GM12878 (cell line): ENCODE measurements at regions of chr10 and their contacts with region 1.

Region 1: DNA sequence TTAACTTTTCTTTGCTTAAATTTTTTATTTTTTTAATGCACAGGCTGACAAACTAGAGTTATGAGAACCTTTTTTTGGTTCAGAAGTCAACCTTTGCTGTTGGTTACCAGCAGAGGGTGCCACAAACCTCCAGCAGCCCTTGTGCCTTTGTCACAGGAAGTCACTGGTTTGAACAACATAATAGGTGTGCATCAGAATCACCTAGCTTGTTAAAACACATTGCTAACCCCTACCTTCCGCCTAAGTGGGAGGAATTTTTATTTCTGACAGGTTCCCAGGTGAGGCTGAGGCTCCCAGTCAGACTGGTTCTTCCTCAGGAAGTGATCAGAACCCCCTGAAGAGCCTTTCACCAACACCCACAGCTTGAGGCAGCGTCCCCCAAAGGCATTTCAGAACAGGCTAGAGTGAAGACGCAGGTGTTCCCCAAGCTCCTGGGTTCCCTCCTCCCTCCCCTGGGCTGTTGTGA is 22.6 kb upstream of the VDAC2 start:
- DNase-seq: peak; percentile 20
- ATAC-seq: peak; percentile 96
- H3K4me3 ChIP-seq: no peak overlapping the region
- H3K27ac ChIP-seq: no peak overlapping the region
- H3K4me1 ChIP-seq: no peaks in the 10 kb centered on the region
- H3K27me3 ChIP-seq: no peaks in the 10 kb centered on the region
- CTCF ChIP-seq: peak; percentile 75 to 81 (median 79)
- EP300 ChIP-seq: no peak
- POLR2A ChIP-seq: no peak
- RAD21 ChIP-seq: peak; percentile 83

Region 2: DNA sequence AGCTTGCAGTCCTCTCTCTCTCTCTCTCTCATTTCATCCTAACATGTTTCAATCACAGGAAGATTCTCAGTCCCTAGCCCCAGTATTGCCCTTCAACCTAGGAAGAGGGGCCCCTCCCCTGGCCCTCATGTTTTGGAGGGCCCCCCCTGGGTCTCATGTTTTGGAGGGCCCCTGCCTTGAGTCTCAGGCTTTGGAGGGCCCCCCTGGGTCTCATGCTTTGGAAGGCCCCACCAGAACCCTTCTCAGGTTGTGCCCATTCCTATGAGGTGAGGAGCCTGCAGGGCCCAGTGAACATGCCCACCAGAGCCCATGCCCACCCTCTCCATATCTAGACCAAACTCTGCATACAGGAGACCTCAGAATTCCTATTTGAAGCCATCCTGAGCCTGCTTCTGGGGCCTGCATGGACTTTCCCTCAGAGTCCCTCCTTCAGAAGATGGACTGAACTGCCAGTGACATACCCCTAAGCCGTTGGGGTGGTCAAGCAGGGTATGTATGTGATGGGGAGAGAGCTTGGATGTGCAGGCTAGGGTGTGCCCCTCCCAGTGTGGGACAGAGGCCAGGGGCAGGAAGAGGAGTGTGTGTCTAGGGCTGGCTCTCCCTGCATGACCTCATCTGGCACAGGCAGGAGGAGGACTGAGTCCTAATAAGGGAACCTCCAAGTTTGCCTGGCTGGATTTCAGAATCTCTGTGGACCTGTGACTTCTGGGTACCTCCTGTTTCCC is 14.5 kb after region 1 on chr10:
- CTCF ChIA-PET with region 1: interaction called, 12 read pairs
- POLR2A ChIA-PET with region 1: interaction called, 3 read pairs
- RAD21 ChIA-PET with region 1: interaction called, 5 read pairs
- SMC1A ChIA-PET with region 1: interaction called, 4 read pairs
- in situ Hi-C with region 1: no loop called
- intact Hi-C with region 1: no loop called
- DNase-seq: no peak
- ATAC-seq: no peak
- H3K4me3 ChIP-seq: no peak overlapping the region
- H3K27ac ChIP-seq: no peak overlapping the region
- H3K4me1 ChIP-seq: no peaks in the 10 kb centered on the region
- H3K27me3 ChIP-seq: no peaks in the 10 kb centered on the region
- CTCF ChIP-seq: no peak
- EP300 ChIP-seq: no peak
- POLR2A ChIP-seq: no peak
- RAD21 ChIP-seq: no peak

Region 3: GRCh38 chr10:75229971-75230370 is 42.0 kb after region 1 on chr10:
- CTCF ChIA-PET with region 1: interaction called, 207 read pairs
- POLR2A ChIA-PET with region 1: interaction called, 6 read pairs
- RAD21 ChIA-PET with region 1: interaction called, 52 read pairs
- SMC1A ChIA-PET with region 1: interaction called, 21 read pairs
- in situ Hi-C with region 1: no loop called
- intact Hi-C with region 1: no loop called
- DNase-seq: no peak
- ATAC-seq: no peak
- H3K4me3 ChIP-seq: no peak overlapping the region
- H3K27ac ChIP-seq: no peak overlapping the region
- H3K4me1 ChIP-seq: peaks cover 9% of the 10 kb centered on the region
- H3K27me3 ChIP-seq: no peaks in the 10 kb centered on the region
- CTCF ChIP-seq: no peak
- EP300 ChIP-seq: no peak
- POLR2A ChIP-seq: no peak
- RAD21 ChIP-seq: no peak

Region 4: GRCh38 chr10:75283671-75284470 is 95.9 kb after region 1 on chr10:
- CTCF ChIA-PET with region 1: no interaction called
- POLR2A ChIA-PET with region 1: no interaction called
- RAD21 ChIA-PET with region 1: no interaction called
- SMC1A ChIA-PET with region 1: no interaction called
- in situ Hi-C with region 1: no loop called
- intact Hi-C with region 1: no loop called
- DNase-seq: no peak
- ATAC-seq: no peak
- H3K4me3 ChIP-seq: no peak overlapping the region
- H3K27ac ChIP-seq: no peak overlapping the region
- H3K4me1 ChIP-seq: no peaks in the 10 kb centered on the region
- H3K27me3 ChIP-seq: peaks cover 3 to 6% of the 10 kb centered on the region in 2 experiments; a peak in 3 of 4 replicates
- CTCF ChIP-seq: no peak
- EP300 ChIP-seq: no peak
- POLR2A ChIP-seq: no peak
- RAD21 ChIP-seq: no peak